IMR-90 (cell line): ENCODE measurements at regions of chr1 and their contacts with region 1.

Region 1: GRCh38 chr1:63405020-63405419 is 37.6 kb downstream of the ALG6 start:
- DNase-seq: no peak
- ATAC-seq: no peak
- H3K4me3 ChIP-seq: no peak overlapping the region
- H3K27ac ChIP-seq: no peak overlapping the region
- H3K4me1 ChIP-seq: peaks cover 4% of the 10 kb centered on the region; the same call in 1 of the 2 replicates
- H3K27me3 ChIP-seq: no peaks in the 10 kb centered on the region
- CTCF ChIP-seq: no peak
- POLR2A ChIP-seq: no peak
- RAD21 ChIP-seq: no peak

Region 2: DNA sequence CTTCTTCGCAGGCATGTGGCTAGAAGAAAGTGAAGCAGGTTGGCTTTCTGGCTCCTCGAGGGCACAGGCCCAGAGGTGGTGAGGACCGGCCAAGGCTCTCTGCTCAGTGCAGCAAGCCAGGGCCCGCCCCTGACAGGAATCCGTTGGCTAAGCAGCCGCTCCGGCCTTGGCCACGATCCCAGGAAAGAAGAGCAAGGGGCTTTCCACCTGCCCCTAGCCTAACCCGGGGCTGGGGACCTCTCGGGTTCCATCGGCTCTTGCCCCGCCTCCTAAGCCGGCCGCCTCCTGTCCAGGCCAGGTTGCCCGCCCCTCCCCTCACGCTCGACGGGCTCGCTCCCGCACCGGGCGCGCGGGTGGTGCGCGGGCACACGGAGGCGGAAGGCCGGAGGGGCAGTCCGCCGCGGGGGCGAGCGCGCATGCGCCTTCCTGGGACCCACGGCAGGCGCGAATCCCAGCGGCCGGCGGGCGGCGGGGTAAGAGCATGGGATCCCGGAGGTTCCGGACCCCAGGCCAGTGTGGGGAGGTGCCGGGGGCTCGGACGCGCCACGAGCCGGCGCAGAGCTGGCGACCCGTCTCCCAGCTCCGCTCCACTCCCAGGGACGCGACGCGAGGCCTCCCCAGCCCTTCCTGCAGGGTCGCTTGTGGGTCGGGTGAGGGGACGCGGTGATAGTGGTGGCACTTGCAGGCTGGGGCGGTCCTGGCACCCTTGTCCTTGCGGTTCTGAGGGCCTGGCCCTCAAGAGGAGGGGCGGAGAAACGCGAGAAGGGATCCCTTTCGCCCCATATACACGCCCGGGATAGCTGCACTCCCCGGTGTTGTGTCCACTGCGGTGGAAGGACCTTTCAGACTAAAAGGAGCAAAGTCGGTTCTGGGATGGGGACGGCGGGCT is 37.6 kb before region 1 on chr1 and contains the start of gene ALG6:
- CTCF ChIA-PET with region 1: no interaction called
- POLR2A ChIA-PET with region 1: no interaction called
- dilution Hi-C with region 1: no loop called
- in situ Hi-C with region 1: no loop called
- intact Hi-C with region 1: loop called (anchors 5 kb)
- DNase-seq: peak; percentile 87
- ATAC-seq: peak; percentile 98
- H3K4me3 ChIP-seq: peak within 1 kb of the TSS; percentile 88
- H3K27ac ChIP-seq: peak within 1 kb of the TSS; percentile 83
- H3K4me1 ChIP-seq: no peaks in the 10 kb centered on the region
- H3K27me3 ChIP-seq: peaks cover 2% of the 10 kb centered on the region
- CTCF ChIP-seq: 0 out of 2 replicates have a peak, but pooled peaks have one; percentile 14
- POLR2A ChIP-seq: peak; percentile 45; the same call in 1 of the 2 replicates
- RAD21 ChIP-seq: no peak
- total RNA-seq, gene ALG6: 4.8 and 12.2 TPM in 2 replicates